ENCODE measurements at regions of chr1 and their contacts with region 1.

Region 1: DNA sequence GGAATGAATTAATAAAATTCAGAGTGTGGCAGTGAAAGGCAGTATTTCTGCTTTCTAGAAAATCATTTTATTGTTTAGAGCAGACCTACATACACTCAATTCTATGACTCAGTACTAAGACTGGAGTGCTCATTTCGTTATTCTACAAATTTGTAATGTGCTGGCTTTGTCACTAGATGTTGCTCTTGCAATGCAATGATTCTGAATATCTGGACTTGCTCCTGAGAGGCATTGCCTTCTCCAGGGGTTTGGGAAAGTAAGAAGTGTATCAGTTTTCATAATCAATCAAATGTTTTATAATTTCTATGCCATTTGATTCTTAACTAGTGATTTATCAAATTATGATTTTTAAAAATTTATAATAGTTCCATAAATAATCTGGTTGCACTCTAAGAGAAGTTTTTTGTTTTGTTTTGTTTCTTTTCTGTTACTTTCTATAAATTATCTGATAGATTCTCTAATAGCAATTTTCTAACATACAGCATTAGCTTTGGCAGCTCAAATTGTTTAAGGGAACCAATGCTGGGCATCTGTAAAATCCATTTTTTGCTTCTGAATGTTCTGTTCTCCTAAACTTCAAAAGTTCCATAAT is 280.5 kb upstream of the SGIP1 start:
- DNase-seq: no peak
- H3K4me3 ChIP-seq: no peak overlapping the region
- H3K27ac ChIP-seq: no peak overlapping the region
- H3K4me1 ChIP-seq: no peaks in the 10 kb centered on the region
- H3K27me3 ChIP-seq: no peaks in the 10 kb centered on the region
- CTCF ChIP-seq: peak; percentile 74

Region 2: GRCh38 chr1:66339944-66340343 is 86.5 kb after region 1 on chr1:
- CTCF ChIA-PET with region 1: no interaction called
- POLR2A ChIA-PET with region 1: no interaction called
- intact Hi-C with region 1: no loop called
- DNase-seq: no peak
- H3K4me3 ChIP-seq: no peak overlapping the region
- H3K27ac ChIP-seq: no peak overlapping the region
- H3K4me1 ChIP-seq: no peaks in the 10 kb centered on the region
- H3K27me3 ChIP-seq: no peaks in the 10 kb centered on the region
- CTCF ChIP-seq: no peak

Region 3: DNA sequence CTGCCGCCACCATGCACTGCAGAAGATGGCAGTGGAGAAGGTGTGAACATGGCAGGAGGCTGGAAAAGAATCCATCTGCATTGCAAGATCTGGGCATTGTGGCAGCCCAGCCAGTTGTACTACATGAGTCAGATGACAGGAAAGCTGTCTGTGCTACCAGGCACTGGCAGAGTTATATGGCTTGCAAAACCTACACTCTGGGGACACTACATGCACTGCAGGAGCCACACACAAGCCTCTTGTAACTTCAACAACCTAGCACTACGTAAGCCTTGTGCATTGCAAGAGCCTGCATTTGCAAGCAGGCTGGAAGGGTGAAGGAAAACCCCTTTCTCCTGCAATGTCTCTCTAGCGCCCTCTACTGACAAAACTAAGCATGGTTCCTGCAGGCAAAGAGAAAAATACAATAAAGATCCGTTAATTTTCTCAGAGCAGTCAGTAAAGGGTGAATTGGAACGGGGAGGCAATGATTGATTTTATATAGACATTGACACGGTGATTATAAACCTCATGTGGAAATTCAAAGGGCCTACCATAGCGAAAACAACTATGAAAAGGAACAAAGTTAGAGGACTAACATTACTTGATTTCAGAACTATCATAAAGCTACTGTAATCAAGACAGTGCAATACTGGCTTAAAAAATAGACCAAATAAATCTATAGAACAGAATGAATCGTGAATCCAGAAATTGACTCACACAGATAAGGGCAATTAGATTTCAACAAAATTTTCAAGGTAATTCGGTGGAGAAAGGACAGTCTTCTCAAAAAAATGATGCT is 472.6 kb after region 1 on chr1:
- CTCF ChIA-PET with region 1: no interaction called
- POLR2A ChIA-PET with region 1: no interaction called
- intact Hi-C with region 1: loop called (anchors 2 kb)
- DNase-seq: peak; percentile 41 to 42
- H3K4me3 ChIP-seq: no peak overlapping the region
- H3K27ac ChIP-seq: no peak overlapping the region
- H3K4me1 ChIP-seq: no peaks in the 10 kb centered on the region
- H3K27me3 ChIP-seq: no peaks in the 10 kb centered on the region
- CTCF ChIP-seq: peak; percentile 96